Uterus (tissue), 4 donors: ENCODE measurements at regions of chr1 and their contacts with region 1.

Region 1: DNA sequence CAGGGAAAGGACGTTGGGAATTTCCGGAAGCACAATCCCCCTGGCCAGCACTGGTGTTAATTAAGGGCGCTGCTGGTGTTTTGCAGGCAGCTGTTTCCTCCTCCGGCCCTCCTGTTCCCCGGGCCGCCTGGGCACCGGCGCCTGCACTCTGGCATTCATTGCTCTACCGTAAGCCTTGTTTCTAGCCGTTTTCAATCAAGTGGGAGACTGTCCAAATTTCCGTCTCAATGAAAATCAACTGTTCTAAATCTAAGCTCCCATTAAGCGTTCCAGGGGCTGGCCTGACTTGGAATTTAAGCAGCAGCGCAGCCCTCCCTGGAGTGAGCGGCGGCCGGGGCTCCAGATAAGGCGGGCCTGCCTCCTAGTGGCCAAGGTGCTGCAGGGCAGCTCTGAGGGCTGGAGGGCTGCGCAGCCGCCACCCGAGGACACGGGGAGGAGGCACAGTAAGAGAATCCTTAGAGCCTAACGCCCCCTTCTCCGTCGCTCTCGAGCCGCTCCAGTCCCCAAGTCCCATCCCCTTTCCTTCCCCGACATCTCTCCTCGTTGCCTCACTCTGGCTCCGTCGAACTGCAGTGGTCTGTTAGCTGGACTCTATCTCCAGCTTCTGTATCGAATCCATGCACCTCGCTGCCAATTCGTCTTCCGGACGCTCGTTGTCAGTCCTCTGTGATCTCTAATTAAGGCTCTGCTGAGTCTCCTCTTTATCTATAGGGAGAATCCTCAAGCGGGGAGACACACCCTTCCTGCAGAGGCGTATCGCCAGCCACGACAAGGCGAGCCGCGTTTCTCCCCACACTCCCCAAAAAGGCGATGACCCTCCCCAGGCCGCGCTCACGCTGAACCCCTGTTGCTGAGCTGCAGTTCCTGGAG is 57.8 kb upstream of the LRRC8D start:
- DNase-seq: peak; percentile 81 to 84
- H3K4me3 ChIP-seq: peak overlapping the region; percentile 38 to 41
- H3K27ac ChIP-seq: peak overlapping the region; percentile 53 to 88
- H3K4me1 ChIP-seq: no peaks in the 10 kb centered on the region
- H3K27me3 ChIP-seq: no peaks in the 10 kb centered on the region
- CTCF ChIP-seq: peak; percentile 91 to 97 (median 96)
- POLR2A ChIP-seq: no peak

Region 2: GRCh38 chr1:89483010-89483756 is 279.8 kb before region 1 on chr1:
- intact Hi-C with region 1: loop called (anchors 10 kb)
- DNase-seq: peak; percentile 64 to 85
- H3K4me3 ChIP-seq: no peak overlapping the region
- H3K27ac ChIP-seq: no peak overlapping the region
- H3K4me1 ChIP-seq: no peaks in the 10 kb centered on the region
- H3K27me3 ChIP-seq: no peaks in the 10 kb centered on the region
- CTCF ChIP-seq: peak; percentile 59 to 81 (median 74)
- POLR2A ChIP-seq: no peak

Region 3: DNA sequence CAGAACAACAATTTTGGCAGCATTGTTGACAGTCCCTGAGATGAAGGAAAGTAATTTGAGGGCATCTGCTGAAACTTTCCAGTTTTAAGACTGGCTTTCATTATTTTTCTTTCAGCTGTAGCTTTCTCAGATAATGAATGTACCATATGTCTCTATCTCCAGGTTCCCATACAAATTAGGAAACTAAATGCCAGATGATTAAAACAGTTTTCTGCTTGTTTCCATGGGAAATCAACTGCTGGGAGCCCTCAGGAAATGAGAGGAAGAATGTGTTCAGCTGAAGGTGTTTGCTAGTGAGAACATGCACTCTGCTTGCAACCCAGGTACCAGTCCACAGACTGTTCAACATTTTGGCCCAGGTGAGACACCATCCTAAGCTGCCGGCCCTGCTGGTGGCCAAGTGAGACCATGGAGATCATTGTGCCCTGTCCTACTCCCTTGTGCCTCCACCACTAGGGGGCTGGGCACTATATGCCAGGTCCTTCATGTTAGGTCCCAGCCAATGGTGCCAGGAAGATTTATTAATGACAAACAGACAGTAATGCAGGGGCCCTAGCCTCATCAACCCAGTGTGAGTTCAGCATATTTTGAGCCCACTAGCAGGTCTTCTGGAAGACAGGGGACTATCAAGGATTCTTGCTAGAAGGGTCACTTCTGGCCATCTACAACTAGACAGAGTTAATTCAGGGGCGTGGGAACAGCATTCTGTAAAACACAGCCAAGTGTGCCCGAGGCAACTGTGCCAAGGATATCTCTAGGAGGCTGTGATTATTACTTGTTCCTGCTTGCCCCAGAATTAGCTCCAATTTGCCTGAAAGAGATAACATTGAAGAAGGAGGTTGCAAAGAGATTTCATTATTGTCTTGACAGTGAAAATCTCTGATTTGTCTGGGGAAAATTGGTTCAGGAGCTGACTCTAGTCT is 147.1 kb before region 1 on chr1:
- intact Hi-C with region 1: no loop called
- DNase-seq: no peak
- H3K4me3 ChIP-seq: no peak overlapping the region
- H3K27ac ChIP-seq: peak overlapping the region in 1 of 2 donors; percentile 18
- H3K4me1 ChIP-seq: no peaks in the 10 kb centered on the region
- H3K27me3 ChIP-seq: no peaks in the 10 kb centered on the region
- CTCF ChIP-seq: no peak
- POLR2A ChIP-seq: no peak

Region 4: GRCh38 chr1:89632657-89633247 is 130.3 kb before region 1 on chr1 and contains the start of gene LRRC8C:
- intact Hi-C with region 1: loop called (anchors 10 kb)
- DNase-seq: peak; percentile 78 to 84
- H3K4me3 ChIP-seq: peak within 1 kb of the TSS; percentile 80 to 94
- H3K27ac ChIP-seq: peak within 1 kb of the TSS; percentile 93 to 95
- H3K4me1 ChIP-seq: peaks cover 0 to 4% of the 10 kb centered on the region in 2 donors
- H3K27me3 ChIP-seq: no peaks in the 10 kb centered on the region
- CTCF ChIP-seq: peak in 3 of 4 experiments; percentile 58 to 84 (median 80)
- POLR2A ChIP-seq: peak in 1 of 2 donors; percentile 54
- total RNA-seq, gene LRRC8C: 10.9 to 23.8 (median 19.8) TPM

Region 5: GRCh38 chr1:89688607-89689006 is 74.4 kb before region 1 on chr1:
- intact Hi-C with region 1: no loop called
- DNase-seq: no peak
- H3K4me3 ChIP-seq: no peak overlapping the region
- H3K27ac ChIP-seq: no peak overlapping the region
- H3K4me1 ChIP-seq: peaks cover 0 to 4% of the 10 kb centered on the region in 2 donors
- H3K27me3 ChIP-seq: no peaks in the 10 kb centered on the region
- CTCF ChIP-seq: no peak
- POLR2A ChIP-seq: no peak